CD4-positive, alpha-beta memory T cell (primary cell): ENCODE measurements at regions of chr1 and their contacts with region 1.

Region 1: GRCh38 chr1:77759071-77760028 is at the start of gene USP33:
- DNase-seq: peak; percentile 89 to 93 (median 90)
- H3K4me3 ChIP-seq: peak within 1 kb of the TSS; percentile 55 to 76
- H3K4me3 Mint-ChIP-seq: peak within 1 kb of the TSS; percentile 90 to 97 (median 95)
- H3K27ac ChIP-seq: peak within 1 kb of the TSS; percentile 85
- H3K27ac Mint-ChIP-seq: peak within 1 kb of the TSS; percentile 92 to 97 (median 93)
- H3K4me1 ChIP-seq: peaks cover 48% of the 10 kb centered on the region
- H3K4me1 Mint-ChIP-seq: peaks cover 32 to 51% (median 39%) of the 10 kb centered on the region in 4 donors
- H3K27me3 ChIP-seq: no peaks in the 10 kb centered on the region
- H3K27me3 Mint-ChIP-seq: no peaks in the 10 kb centered on the region
- total RNA-seq, gene USP33: 87.4 to 89.1 TPM

Region 2: DNA sequence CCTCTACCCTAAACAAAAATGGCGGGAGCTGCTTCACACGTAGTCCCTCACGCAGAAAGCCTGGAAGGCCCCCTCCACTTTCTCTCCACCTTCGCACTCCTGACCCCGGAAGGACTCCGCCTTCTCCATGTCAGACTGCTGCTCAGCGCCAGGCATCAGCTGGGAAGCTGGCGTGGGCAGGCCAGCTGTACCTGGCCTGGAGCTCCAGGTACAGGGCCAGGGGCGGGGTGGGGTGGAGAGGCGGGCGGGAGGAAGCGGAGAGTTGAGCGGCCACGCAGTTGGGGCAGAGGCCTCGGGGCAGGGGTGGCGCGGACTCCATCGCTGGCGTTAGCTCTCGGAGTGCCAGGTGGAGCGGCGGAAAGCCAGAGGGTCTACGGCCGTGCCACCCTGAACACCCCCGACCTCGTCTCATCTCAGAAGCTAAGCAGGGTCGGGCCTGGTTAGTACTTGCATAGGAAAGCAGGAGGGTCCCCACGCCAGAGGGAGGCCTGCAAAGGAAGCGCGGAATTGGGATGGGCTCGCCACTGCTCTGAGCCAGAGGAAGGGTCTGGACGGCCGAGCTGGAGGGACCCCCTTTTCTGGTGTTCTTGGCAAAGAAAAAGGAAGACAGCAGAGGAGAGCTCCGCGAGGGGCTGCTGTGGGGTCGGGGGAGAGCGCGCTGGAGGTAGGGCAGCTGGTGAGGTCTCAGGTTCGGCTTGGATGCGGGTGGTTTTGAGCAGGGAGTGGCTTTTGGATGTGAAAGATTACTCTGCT is 20.4 kb after region 1 on chr1 and contains the start of gene MIGA1:
- CTCF ChIA-PET with region 1: no interaction called
- POLR2A ChIA-PET with region 1: interaction called, 20 read pairs
- intact Hi-C with region 1: loop called (anchors 1 kb)
- DNase-seq: peak; percentile 86 to 93 (median 87)
- H3K4me3 ChIP-seq: peak within 1 kb of the TSS; percentile 83 to 96
- H3K4me3 Mint-ChIP-seq: peak within 1 kb of the TSS; percentile 85 to 96 (median 94)
- H3K27ac ChIP-seq: peak within 1 kb of the TSS; percentile 68
- H3K27ac Mint-ChIP-seq: peak within 1 kb of the TSS; percentile 91 to 96 (median 93)
- H3K4me1 ChIP-seq: peaks cover 36% of the 10 kb centered on the region
- H3K4me1 Mint-ChIP-seq: peaks cover 28 to 42% (median 34%) of the 10 kb centered on the region in 4 donors
- H3K27me3 ChIP-seq: no peaks in the 10 kb centered on the region
- H3K27me3 Mint-ChIP-seq: no peaks in the 10 kb centered on the region
- total RNA-seq, gene MIGA1: 21.7 TPM

Region 3: DNA sequence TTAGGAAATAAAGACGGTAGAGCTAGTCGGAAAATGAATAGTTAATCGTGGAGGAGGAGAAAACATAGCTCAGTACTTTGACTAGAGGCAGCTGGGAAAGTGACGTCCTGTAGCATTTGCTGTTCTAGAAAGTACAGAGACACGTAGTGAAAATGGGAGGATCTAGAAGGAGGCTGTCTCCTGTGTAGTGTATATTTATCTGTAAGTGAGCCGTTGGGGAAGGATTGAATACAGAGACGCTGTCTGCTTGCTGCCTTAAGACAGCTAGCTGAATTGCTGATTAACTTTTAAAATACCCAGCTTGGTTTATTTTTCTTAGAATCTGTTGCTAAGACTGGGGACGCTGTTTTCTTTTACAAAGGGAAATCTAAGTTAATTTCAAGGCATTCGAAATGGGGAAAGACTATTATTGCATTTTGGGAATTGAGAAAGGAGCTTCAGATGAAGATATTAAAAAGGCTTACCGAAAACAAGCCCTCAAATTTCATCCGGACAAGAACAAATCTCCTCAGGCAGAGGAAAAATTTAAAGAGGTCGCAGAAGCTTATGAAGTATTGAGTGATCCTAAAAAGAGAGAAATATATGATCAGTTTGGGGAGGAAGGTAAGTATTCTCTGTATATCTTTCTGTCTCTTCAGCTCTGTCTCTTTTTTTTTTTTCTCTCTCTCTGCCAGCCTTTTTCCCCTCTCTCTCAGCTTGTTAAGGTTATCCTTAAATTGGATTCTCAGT is 245.5 kb after region 1 on chr1 and contains the start of gene DNAJB4:
- CTCF ChIA-PET with region 1: no interaction called
- POLR2A ChIA-PET with region 1: interaction called, 3 read pairs
- intact Hi-C with region 1: loop called (anchors 1 kb)
- DNase-seq: peak; percentile 80 to 90 (median 89)
- H3K4me3 ChIP-seq: peak within 1 kb of the TSS; percentile 73 to 85
- H3K4me3 Mint-ChIP-seq: peak within 1 kb of the TSS; percentile 78 to 95 (median 90)
- H3K27ac ChIP-seq: peak within 1 kb of the TSS; percentile 72
- H3K27ac Mint-ChIP-seq: peak within 1 kb of the TSS; percentile 96 to 99 (median 98)
- H3K4me1 ChIP-seq: peaks cover 31% of the 10 kb centered on the region
- H3K4me1 Mint-ChIP-seq: peaks cover 16 to 48% (median 26%) of the 10 kb centered on the region in 4 donors
- H3K27me3 ChIP-seq: no peaks in the 10 kb centered on the region
- H3K27me3 Mint-ChIP-seq: no peaks in the 10 kb centered on the region
- total RNA-seq, gene DNAJB4: 15.5 to 18.3 TPM